ENCODE measurements at regions of chr16 and their contacts with region 1.

Region 1: DNA sequence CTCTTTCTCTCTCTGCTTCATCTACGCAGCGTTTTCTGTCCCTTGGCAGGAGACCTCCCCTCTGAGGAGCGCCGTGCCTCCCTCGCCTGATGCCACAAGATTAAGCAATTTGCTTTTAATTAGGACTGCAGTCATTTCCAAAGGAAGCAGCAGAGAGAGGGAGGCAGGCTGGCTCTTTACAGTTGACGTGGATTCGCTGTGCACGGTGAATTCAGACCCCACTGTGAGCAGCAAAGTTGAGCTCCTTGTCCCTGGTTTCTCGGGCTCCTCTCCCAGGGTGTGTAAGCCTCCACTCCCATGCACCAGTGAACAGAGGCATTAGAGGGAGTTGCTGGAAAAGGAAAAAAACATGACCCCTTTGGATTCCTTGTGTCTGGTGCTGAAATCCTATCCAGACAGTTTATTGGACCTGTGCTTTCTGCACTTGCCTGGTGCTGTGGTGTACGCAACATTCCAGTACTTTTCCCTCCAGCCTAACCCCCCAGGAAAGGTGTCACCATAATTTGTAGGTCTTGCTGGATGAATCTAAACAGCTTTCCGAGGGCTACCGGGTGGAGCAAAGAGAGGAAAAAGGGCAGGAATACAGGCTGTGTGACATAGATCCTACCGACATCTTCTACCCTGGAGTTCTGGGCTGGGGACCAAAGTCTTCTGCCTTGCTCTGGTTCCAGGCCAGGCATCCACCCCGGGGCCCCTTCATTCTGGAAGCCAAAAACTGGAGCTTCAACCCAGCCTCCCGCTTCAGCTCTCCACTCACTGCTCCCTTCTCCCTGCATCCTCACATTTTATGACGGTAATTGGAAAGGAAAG is 171.0 kb downstream of the MAF start:
- DNase-seq: no peak
- H3K4me3 ChIP-seq: no peak overlapping the region
- H3K27ac ChIP-seq: no peak overlapping the region
- H3K27me3 ChIP-seq: no peaks in the 10 kb centered on the region
- CTCF ChIP-seq: no peak

Region 2: DNA sequence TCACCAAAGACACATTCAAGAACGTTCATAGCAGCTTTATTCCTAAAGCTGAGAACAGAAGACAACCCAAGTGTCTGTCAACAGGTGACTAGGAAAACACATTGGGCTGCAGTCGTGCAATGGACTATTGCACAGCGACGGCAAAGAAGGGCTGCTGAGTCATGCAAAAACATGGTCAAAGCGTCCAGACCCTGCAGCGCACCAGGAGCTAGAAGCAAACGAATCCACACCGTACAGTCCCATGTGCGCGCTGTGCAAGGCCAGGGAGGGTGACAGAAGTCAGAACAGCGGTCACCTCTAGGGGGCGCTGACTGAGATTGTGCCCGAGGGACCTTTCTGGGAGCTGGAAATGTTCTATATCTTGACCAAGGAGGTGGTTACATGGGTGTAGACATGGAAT is 95.5 kb before region 1 on chr16:
- CTCF ChIA-PET with region 1: no interaction called
- POLR2A ChIA-PET with region 1: no interaction called
- DNase-seq: no peak
- H3K4me3 ChIP-seq: no peak overlapping the region
- H3K27ac ChIP-seq: no peak overlapping the region
- H3K27me3 ChIP-seq: no peaks in the 10 kb centered on the region
- CTCF ChIP-seq: no peak

Region 3: DNA sequence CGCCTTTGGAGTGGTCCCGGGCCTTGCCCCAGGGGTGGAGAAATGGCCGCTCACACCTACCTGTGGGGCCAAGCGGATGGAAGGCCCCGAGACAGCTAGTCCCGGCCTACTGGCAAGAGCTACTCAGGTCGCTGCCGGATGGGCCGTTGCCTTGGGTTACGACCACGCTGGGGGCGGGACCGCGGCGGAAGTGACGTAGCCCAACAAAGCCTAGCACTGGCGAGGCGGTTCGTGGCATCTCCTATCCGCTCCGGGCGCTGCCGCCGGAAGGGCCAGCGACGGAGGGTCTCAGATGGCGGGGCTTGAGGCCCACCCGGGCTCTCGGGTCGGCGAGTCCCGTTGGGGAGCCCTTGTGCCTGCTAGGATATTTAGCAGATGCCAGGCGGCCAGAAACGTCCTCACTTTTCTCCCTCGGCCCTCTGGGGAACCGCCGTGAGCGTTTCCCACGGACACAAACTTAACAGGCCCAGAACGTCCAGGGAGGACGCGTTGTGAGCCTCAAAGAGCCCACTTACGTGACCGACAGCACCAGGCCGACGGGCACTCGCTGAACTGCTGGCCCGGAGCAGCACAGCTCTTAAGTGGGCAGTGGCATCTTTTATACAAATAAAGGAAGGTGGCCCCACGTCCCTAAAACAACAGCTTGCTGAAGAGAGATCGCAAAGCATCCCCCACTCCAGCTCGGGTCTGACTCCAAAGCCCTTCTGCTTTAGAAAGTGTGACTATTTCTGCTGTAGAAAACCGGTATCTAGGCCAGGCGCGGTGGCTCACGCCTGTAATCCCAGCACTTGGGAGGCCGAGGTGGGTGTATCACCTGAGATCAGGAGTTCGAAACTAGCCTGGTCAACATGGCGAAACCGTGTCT is 1647.7 kb after region 1 on chr16 and contains the start of gene C16orf46:
- CTCF ChIA-PET with region 1: interaction called, 11 read pairs
- POLR2A ChIA-PET with region 1: no interaction called
- DNase-seq: peak; percentile 84
- H3K4me3 ChIP-seq: peak within 1 kb of the TSS; percentile 93
- H3K27ac ChIP-seq: peak within 1 kb of the TSS; percentile 96
- H3K27me3 ChIP-seq: no peaks in the 10 kb centered on the region
- CTCF ChIP-seq: no peak
- polyA plus RNA-seq, gene C16orf46: 0.31 and 0.33 TPM in 2 replicates

Measured in AG04450 (cell line).